Head of caudate nucleus (tissue), 42 donors: ENCODE measurements at regions of chr13 and their contacts with region 1.

Region 1: GRCh38 chr13:39263033-39263432 is 224.8 kb downstream of the NHLRC3 start:
- DNase-seq: peak in 37 of 42 donors; percentile 10 to 87 (median 57)

Region 2: GRCh38 chr13:39051157-39051556 is 211.9 kb before region 1 on chr13:
- intact Hi-C with region 1: loop called (anchors 5 kb)
- DNase-seq: no peak

Region 3: GRCh38 chr13:39144941-39145533 is 118.0 kb before region 1 on chr13:
- intact Hi-C with region 1: loop called (anchors 10 kb)
- DNase-seq: peak; percentile 9 to 87 (median 69)

Region 4: GRCh38 chr13:39347926-39348901 is 85.2 kb after region 1 on chr13:
- intact Hi-C with region 1: no loop called
- DNase-seq: peak in 18 of 42 donors; percentile 4 to 53 (median 24)

Region 5: DNA sequence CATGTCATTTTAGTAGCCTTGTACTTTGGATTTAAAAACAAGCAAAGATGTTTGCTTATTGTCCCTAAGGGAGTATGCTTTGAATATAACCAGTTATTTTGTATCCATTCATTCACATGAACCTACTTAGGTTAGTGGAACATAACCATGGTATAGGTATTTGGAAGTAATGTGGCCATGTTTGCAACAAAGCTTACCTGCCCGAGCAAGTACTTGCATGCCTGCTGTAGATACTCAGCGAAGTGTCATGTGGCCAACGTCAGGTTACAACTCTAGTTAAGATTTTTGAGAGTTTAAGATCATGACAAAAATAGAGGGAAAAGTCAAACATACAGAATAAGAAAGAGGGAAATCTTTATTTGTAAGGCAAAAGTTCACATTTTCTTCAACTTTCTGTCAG is 449.6 kb after region 1 on chr13:
- intact Hi-C with region 1: no loop called
- DNase-seq: peak in 2 of 42 donors; percentile 12 to 13